ENCODE measurements at regions of chr12 and their contacts with region 1.

Region 1: DNA sequence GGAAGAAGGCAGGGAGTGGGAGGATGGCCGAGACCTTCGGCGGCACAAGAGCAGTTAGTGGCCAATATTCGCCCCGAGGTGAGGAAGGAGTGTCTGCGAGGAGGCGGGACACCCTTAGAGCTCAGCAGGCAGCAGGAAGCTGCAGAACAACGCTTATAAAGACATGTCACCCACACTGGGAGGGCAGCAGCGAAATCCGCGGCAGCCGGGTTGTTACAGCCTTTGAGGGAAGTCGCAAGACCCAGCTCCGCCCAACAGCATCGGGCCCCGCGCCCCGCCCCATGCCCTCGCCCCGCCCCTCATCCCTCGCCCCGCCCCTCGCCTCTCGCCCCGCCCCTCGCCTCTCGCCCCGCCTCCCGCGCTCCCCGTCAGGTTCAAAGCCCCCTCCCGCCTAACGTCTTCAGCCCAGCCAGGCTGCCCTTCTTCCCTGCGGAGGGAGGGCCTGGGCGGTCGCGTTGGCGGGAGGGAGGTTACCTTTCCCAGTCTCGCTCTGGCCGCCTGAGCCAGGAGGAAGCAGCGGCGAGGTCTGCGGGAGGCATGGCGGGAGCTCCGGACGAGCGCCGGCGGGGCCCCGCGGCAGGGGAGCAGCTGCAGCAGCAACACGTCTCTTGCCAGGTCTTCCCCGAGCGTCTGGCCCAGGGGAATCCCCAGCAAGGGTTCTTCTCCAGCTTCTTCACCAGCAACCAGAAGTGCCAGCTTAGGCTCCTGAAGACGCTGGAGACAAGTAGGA is at the start of gene ATP23:
- DNase-seq: peak; percentile 96 to 97 (median 96)
- ATAC-seq: peak; percentile 92
- H3K4me3 ChIP-seq: peak within 1 kb of the TSS; percentile 88
- H3K27ac ChIP-seq: peak within 1 kb of the TSS; percentile 94
- H3K4me1 ChIP-seq: peaks cover 0 to 2% of the 10 kb centered on the region in 2 experiments; a peak in 4 of 5 replicates
- H3K27me3 ChIP-seq: no peaks in the 10 kb centered on the region
- CTCF ChIP-seq: no peak; a peak in 1 of 6 replicates
- EP300 ChIP-seq: no peak; the same call in 1 of the 2 replicates
- POLR2A ChIP-seq: peak; percentile 96
- RAD21 ChIP-seq: no peak
- polyA plus RNA-seq, gene ATP23: 8.3 to 12.4 TPM

Region 2: GRCh38 chr12:57661376-57661775 is 280.0 kb before region 1 on chr12:
- CTCF ChIA-PET with region 1: no interaction called
- POLR2A ChIA-PET with region 1: no interaction called
- in situ Hi-C with region 1: no loop called
- intact Hi-C with region 1: no loop called
- DNase-seq: peak in 1 of 4 experiments; percentile 52
- ATAC-seq: peak; percentile 81
- H3K4me3 ChIP-seq: no peak overlapping the region
- H3K27ac ChIP-seq: no peak overlapping the region
- H3K4me1 ChIP-seq: peaks cover 0 to 6% of the 10 kb centered on the region in 2 experiments; a peak in 2 of 5 replicates
- H3K27me3 ChIP-seq: no peaks in the 10 kb centered on the region
- CTCF ChIP-seq: no peak
- EP300 ChIP-seq: no peak
- POLR2A ChIP-seq: no peak
- RAD21 ChIP-seq: no peak

Region 3: GRCh38 chr12:57861967-57862366 is 79.4 kb before region 1 on chr12:
- CTCF ChIA-PET with region 1: no interaction called
- POLR2A ChIA-PET with region 1: no interaction called
- in situ Hi-C with region 1: no loop called
- intact Hi-C with region 1: no loop called
- DNase-seq: no peak
- ATAC-seq: no peak
- H3K4me3 ChIP-seq: no peak overlapping the region
- H3K27ac ChIP-seq: no peak overlapping the region
- H3K4me1 ChIP-seq: peaks cover 6 to 15% of the 10 kb centered on the region in 2 experiments; a peak in 4 of 5 replicates
- H3K27me3 ChIP-seq: no peaks in the 10 kb centered on the region
- CTCF ChIP-seq: no peak
- EP300 ChIP-seq: no peak
- POLR2A ChIP-seq: no peak
- RAD21 ChIP-seq: no peak

Region 4: DNA sequence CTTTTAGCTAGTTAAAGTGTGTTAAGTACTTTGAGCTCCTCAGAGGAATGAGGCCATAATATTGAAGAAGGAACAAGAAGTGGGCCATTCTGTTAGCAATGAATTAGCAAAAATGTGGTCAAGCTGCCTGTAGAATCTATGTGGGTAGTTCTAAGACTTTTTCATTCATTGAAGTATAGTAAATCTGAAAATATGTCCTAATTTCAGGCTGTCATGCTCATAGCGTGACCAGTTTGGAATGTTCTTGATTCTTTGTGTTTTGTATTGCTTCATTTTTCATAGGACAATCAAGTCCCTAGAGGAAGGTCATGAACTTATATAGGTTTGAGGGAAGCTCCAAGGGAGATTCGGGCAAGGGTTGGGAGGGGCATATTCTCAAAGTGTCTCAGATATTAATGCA is 11.4 kb after region 1 on chr12:
- CTCF ChIA-PET with region 1: no interaction called
- POLR2A ChIA-PET with region 1: interaction called, 17 read pairs
- in situ Hi-C with region 1: no loop called
- intact Hi-C with region 1: no loop called
- DNase-seq: no peak
- ATAC-seq: no peak
- H3K4me3 ChIP-seq: no peak overlapping the region
- H3K27ac ChIP-seq: no peak overlapping the region
- H3K4me1 ChIP-seq: no peaks in the 10 kb centered on the region
- H3K27me3 ChIP-seq: no peaks in the 10 kb centered on the region
- CTCF ChIP-seq: no peak
- EP300 ChIP-seq: no peak
- POLR2A ChIP-seq: no peak
- RAD21 ChIP-seq: no peak

Measured in K562 (cell line).